Posterior vena cava (tissue), 2 donors: ENCODE measurements at regions of chr11 and their contacts with region 1.

Region 1: DNA sequence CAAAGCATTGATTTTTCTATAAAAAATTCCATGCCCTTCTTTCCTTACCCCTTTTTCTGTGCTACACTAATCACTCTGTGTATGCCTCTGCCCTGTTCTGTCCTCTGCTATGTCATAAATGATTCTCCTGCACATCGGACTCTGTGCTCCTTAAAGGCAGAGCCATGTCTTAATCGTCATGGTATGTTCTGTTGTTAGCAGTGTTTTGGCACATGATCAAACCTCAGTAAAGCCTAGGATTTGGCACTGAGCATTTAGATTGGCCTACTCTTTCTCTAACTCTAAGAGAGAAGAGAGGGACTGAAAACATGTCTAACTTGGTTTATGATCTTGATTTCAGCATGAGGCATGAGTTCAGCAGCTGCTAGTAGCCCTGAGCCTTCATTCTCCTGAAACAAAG is 266.9 kb downstream of the AASDHPPT start:
- DNase-seq: no peak

Region 2: GRCh38 chr11:104594198-104594958 is 1750.0 kb before region 1 on chr11:
- intact Hi-C with region 1: no loop called
- DNase-seq: no peak

Region 3: DNA sequence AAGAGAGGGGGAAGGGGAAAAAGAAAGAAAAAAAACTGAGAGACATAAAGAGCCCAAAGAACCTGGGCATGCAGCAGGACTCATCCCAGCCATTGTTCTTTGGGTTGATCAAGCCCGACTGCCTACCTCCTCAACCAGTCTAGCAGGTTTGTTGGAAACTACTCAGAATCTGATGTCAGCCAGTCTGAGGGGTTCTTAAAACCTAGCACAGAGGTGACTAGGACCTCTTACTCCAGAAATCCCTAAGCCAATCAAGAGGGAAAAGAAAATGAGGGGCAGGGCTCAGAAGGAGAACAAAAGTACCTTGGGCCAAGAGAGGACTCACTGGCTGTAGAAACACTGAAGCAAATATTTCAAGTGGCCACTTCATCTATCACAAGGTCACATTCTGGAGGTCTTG is 38.9 kb before region 1 on chr11:
- intact Hi-C with region 1: loop called in 1 of 2 experiments (anchors 1 kb)
- DNase-seq: no peak

Region 4: GRCh38 chr11:106424111-106424510 is 79.7 kb after region 1 on chr11:
- intact Hi-C with region 1: no loop called
- DNase-seq: no peak